Heart left ventricle (tissue), 16 donors: ENCODE measurements at regions of chr14 and their contacts with region 1.

Region 1: DNA sequence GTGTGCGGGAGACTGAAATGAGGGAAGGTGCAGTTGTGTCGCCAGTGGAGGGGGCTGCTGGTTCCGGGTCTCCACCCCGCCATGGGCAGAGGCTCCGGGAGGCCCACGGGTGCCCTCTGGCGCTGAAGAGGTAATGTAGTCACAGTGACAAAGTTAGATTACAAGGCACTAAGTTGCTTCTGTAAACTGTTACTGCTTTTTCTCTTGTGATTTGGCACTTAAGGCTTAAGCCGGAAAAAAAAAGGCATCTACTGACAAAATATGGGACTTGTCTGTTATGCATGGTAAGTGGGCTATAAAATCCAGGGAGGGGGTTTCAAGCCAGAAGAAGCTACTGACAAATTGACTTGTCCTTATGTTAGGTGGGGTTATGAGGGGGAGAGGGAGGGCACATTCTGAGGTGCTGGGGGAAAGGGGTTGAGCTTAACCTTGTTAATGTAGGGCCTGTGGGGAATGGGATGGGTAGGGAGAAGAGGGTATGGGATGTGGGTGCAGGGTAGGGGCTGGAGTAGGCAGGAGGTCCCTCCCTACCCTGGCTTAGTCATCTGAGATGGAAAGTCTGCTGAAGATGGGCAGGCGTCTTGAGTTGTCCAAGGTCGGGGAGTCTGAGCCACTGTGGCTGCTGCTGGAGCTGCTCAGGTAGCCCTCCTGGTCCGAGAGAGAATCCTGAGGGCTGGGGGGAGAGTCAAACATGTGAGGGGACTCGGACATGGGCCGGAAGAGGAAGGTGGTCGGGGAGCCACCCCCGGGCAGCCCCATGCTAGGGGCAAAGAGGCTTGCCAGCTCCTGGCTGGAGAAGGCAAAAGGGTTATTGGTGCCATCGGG is 3.7 kb downstream of the ZFP36L1 start:
- DNase-seq: peak; percentile 86 to 91 (median 88)
- ATAC-seq: peak in 3 of 4 donors; percentile 34 to 36 (median 35)
- H3K4me3 ChIP-seq: peak overlapping the region; percentile 60 to 94 (median 84)
- H3K27ac ChIP-seq: peak overlapping the region; percentile 98 to 100 (median 99)
- H3K4me1 ChIP-seq: peaks cover 0 to 48% (median 25%) of the 10 kb centered on the region in 12 donors
- H3K27me3 ChIP-seq: no peaks in the 10 kb centered on the region
- CTCF ChIP-seq: peak; percentile 55 to 83 (median 78)
- POLR2A ChIP-seq: no peak

Region 2: DNA sequence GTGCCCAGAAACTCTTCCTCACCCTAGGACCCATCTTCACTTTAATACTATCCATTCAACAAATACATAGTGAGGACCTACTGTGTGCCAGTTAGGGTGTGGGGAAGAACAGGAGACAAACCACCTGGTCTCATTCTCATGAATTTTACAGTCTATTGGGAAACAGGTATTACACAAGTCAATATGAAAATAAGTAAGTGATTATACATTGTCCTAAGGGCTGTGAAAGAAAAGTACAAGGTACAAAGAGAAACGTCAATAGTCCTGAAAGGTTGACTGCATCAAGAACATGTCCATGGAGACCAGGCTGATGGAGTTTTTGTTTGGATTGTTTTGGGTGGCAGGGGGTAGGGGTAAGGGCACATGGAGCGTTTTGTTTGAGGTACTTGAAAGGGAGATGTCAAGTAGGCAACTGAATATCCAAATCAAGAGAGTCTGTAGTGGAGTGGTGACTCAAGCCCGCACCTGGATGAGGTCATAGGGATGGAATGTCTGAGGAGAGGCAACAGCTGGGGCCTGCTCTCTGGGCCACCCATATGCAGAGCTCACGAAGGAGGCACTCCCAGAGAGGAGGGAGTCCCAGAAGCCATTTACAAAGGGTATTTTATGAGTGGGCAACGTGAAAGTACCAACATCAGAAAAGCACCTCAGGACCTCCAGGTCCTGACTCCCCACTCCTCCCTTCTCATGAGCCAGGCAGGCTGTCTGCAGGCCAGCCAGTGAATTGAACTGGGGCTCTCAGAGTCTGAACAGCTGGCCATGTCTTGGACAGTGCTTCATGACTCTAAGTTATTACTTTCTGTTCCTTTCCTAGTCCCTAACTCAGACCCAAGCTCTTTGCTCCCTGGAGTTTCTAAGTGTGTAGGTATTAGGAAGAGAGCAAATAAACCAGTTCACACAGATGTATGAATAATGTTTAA is 268.3 kb before region 1 on chr14:
- intact Hi-C with region 1: loop called in 6 of 10 experiments (anchors 5 to 10 kb)
- DNase-seq: no peak
- ATAC-seq: peak in 1 of 4 donors; percentile 30
- H3K4me3 ChIP-seq: no peak overlapping the region
- H3K27ac ChIP-seq: peak overlapping the region in 7 of 12 donors; percentile 51 to 74 (median 60)
- H3K4me1 ChIP-seq: peaks cover 0 to 74% (median 49%) of the 10 kb centered on the region in 12 donors
- H3K27me3 ChIP-seq: no peaks in the 10 kb centered on the region
- CTCF ChIP-seq: no peak
- POLR2A ChIP-seq: no peak

Region 3: DNA sequence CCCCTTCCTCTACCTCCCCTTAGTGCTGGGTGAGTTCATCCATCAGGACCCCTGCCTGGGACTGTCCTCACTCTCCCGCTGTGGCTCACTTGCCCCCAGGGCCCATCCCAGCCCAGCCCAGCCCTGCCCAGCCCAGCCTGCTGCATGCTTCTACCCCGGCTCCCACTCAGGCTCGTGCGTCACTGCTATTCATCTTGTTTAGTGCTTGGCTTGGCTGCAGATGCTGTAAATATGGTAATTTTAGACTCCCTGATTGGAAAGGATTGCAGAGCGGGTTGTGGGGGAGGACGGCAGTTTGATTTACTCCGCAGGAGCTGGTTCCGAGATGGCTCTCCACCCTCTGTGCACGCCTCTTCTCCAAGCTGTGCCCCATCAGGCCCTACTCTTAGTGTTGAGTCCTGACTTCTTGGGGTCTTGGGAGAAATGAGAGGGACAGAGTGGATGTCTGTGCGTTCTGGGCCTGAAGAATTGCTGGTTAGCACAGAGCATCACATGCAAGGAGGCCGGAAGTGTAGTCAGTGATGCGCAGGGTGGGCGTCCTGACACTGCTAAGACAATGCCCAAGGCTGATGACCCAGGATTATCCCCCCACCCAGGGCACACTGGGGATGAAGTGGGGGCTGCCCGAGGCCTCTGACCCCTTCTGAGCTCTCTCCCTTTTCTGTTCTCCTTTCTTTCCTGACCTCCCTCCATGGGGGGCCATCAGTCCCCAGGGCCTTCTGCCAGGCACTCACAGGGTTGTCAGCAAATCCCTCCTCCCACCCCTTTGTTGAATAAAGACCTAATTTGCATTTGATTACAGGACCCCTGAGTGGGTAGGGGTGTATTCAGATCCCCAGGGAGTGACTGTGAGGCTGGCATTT is 240.8 kb before region 1 on chr14:
- intact Hi-C with region 1: loop called in 5 of 10 experiments (anchors 2 to 5 kb)
- DNase-seq: peak; percentile 88 to 96 (median 92)
- ATAC-seq: peak; percentile 89 to 94 (median 92)
- H3K4me3 ChIP-seq: no peak overlapping the region
- H3K27ac ChIP-seq: peak overlapping the region; percentile 87 to 99 (median 96)
- H3K4me1 ChIP-seq: peaks cover 11 to 89% (median 63%) of the 10 kb centered on the region in 12 donors
- H3K27me3 ChIP-seq: no peaks in the 10 kb centered on the region
- CTCF ChIP-seq: no peak
- POLR2A ChIP-seq: peak in 1 of 2 donors; percentile 47

Region 4: DNA sequence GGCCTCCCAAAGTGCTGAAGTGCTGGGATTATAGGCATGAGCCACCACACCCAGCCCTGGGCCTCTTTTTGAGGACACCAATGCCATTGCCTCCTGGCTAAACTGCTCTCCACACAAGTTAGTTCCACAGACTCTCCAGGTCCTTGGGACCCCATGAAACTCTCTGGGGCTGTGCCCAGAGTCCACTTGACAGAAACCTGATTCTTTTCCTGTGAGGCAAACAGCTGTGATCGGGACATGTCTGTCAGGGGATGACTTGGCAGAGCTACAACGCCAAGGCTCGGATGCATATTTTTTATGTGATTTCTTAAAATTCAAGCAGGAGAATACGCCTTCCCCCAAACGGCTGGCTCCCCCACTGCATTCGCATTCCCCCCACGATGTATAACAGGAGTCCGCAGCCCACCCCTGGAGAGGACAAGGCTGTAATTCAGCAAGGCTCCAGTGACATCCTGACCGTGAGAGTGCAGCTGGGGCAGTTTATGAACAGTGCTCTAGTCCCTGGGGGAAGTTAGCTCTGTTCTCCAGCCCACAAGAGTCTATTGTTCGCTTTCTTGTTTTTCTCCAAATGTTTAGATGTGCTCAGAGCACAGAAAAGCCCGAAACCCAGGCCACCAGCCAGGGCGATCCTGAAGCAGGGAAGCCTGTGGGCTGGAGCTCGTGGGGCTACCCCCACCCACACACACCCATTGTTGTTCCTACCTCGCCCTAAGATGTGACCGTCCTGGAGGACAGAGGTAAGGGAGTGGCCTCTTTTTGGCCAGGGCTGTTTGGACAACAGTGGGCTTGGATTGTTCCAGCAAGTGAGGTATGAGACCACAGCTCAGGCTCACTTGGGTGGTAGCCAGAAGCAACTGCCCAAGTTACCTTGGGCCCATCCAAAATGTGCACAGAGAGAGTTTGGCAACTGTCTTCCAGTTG is 155.9 kb before region 1 on chr14:
- intact Hi-C with region 1: loop called in 1 of 10 experiments (anchors 5 kb)
- DNase-seq: peak; percentile 59 to 80 (median 66)
- ATAC-seq: peak; percentile 52 to 83 (median 67)
- H3K4me3 ChIP-seq: no peak overlapping the region
- H3K27ac ChIP-seq: peak overlapping the region; percentile 52 to 86 (median 75)
- H3K4me1 ChIP-seq: peaks cover 0 to 62% (median 41%) of the 10 kb centered on the region in 12 donors
- H3K27me3 ChIP-seq: no peaks in the 10 kb centered on the region
- CTCF ChIP-seq: no peak
- POLR2A ChIP-seq: no peak

Region 5: GRCh38 chr14:68663385-68664076 is 125.7 kb before region 1 on chr14:
- intact Hi-C with region 1: loop called in 2 of 10 experiments (anchors 5 to 10 kb)
- DNase-seq: no peak
- ATAC-seq: peak in 1 of 4 donors; percentile 48
- H3K4me3 ChIP-seq: peak overlapping the region in 1 of 12 donors; percentile 16
- H3K27ac ChIP-seq: peak overlapping the region in 2 of 12 donors; percentile 19 to 75
- H3K4me1 ChIP-seq: peaks cover 0 to 59% (median 35%) of the 10 kb centered on the region in 12 donors
- H3K27me3 ChIP-seq: no peaks in the 10 kb centered on the region
- CTCF ChIP-seq: no peak
- POLR2A ChIP-seq: no peak

Region 6: GRCh38 chr14:68685419-68686204 is 103.6 kb before region 1 on chr14:
- intact Hi-C with region 1: loop called in 5 of 10 experiments (anchors 2 to 5 kb)
- DNase-seq: peak in 1 of 5 donors; percentile 19
- ATAC-seq: no peak
- H3K4me3 ChIP-seq: no peak overlapping the region
- H3K27ac ChIP-seq: peak overlapping the region in 3 of 12 donors; percentile 34 to 95 (median 84)
- H3K4me1 ChIP-seq: peaks cover 6 to 65% (median 41%) of the 10 kb centered on the region in 12 donors
- H3K27me3 ChIP-seq: no peaks in the 10 kb centered on the region
- CTCF ChIP-seq: no peak
- POLR2A ChIP-seq: no peak

Region 7: GRCh38 chr14:68824517-68825347 is 35.5 kb after region 1 on chr14:
- intact Hi-C with region 1: no loop called
- DNase-seq: peak; percentile 81 to 92 (median 89)
- ATAC-seq: peak; percentile 93 to 96 (median 95)
- H3K4me3 ChIP-seq: peak overlapping the region in 2 of 12 donors; percentile 22 to 23
- H3K27ac ChIP-seq: no peak overlapping the region
- H3K4me1 ChIP-seq: peaks cover 0 to 14% (median 3%) of the 10 kb centered on the region in 12 donors
- H3K27me3 ChIP-seq: no peaks in the 10 kb centered on the region
- CTCF ChIP-seq: peak; percentile 79 to 97 (median 90)
- POLR2A ChIP-seq: no peak

Region 8: DNA sequence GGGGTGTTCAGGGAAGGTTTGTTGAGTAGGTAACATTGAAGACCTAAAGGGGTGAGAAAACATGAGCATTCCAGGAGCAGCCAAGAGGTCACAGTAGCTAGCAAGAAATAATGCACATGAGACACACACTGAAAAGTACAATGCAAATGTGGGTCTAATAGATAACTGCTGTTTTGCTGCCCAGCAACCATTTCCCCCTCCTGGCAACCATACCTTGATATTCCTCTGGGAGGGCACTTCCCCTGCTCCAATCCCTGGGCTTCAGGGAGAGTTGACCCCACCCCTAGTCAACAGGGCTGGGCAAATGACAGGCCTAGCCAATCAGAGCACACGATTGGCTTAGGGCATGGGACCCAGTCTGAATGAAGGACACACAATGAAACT is 198.4 kb after region 1 on chr14:
- intact Hi-C with region 1: no loop called
- DNase-seq: no peak
- ATAC-seq: no peak
- H3K4me3 ChIP-seq: no peak overlapping the region
- H3K27ac ChIP-seq: no peak overlapping the region
- H3K4me1 ChIP-seq: no peaks in the 10 kb centered on the region
- H3K27me3 ChIP-seq: no peaks in the 10 kb centered on the region
- CTCF ChIP-seq: no peak
- POLR2A ChIP-seq: no peak